Activated CD8-positive, alpha-beta T cell treated with anti-CD3 and anti-CD28 coated beads, Interleukin-2, amount 10 ng/mL, durations not matched to agents 7 days and 5 days (primary cell): ENCODE measurements at regions of chr11 and their contacts with region 1.

Region 1: GRCh38 chr11:125649465-125650166 is 24.7 kb downstream of the CHEK1 start:
- DNase-seq: no peak
- ATAC-seq: peak; percentile 81
- H3K4me3 Mint-ChIP-seq: no peak overlapping the region
- H3K27ac Mint-ChIP-seq: no peak overlapping the region
- H3K4me1 Mint-ChIP-seq: peaks cover 16% of the 10 kb centered on the region
- H3K27me3 Mint-ChIP-seq: no peaks in the 10 kb centered on the region

Region 2: DNA sequence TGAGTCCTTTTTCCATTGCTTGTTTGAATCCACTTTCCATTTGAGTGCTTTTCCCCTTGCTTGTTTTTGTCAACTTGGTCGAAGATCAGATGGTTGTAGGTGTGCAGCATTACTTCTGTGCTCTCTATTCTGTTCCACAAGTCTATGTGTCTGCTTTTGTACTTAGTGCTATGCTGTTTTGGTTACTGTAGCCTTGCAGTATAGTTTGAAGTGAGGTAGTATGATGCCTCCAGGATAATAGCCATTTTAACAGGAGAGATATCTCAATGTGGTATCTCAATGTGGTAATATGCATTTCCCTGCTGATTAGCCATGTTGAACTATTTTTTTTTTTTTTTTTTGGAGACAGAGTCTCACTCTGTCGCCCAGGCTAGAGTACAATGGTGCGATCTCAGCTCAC is 14.3 kb after region 1 on chr11:
- CTCF ChIA-PET with region 1: no interaction called
- POLR2A ChIA-PET with region 1: no interaction called
- DNase-seq: no peak
- ATAC-seq: peak; percentile 36
- H3K4me3 Mint-ChIP-seq: no peak overlapping the region
- H3K27ac Mint-ChIP-seq: no peak overlapping the region
- H3K4me1 Mint-ChIP-seq: peaks cover 14% of the 10 kb centered on the region
- H3K27me3 Mint-ChIP-seq: no peaks in the 10 kb centered on the region

Region 3: DNA sequence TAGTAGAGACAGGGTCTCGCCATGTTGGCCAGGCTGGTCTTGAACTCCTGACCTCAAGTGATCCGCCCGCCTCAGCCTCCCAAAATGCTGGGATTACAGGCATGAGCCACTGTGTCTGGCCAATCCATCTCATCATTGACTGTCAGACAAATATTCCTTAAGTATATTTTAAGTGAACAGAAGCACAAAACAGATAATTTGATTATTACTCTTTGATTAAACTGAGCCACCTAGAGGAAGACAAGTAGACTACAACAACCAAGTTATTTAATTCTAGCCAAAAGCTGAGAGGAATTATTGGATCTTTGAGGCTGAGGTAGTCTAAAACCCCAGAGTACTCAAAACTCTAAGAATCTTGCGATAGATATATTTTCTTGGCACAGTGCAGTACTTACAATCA is 29.8 kb after region 1 on chr11:
- CTCF ChIA-PET with region 1: interaction called, 11 read pairs
- POLR2A ChIA-PET with region 1: no interaction called
- DNase-seq: no peak
- ATAC-seq: no peak
- H3K4me3 Mint-ChIP-seq: no peak overlapping the region
- H3K27ac Mint-ChIP-seq: no peak overlapping the region
- H3K4me1 Mint-ChIP-seq: no peaks in the 10 kb centered on the region
- H3K27me3 Mint-ChIP-seq: no peaks in the 10 kb centered on the region

Region 4: GRCh38 chr11:125797641-125798040 is 148.0 kb after region 1 on chr11:
- CTCF ChIA-PET with region 1: no interaction called
- POLR2A ChIA-PET with region 1: no interaction called
- DNase-seq: no peak
- ATAC-seq: no peak
- H3K4me3 Mint-ChIP-seq: no peak overlapping the region
- H3K27ac Mint-ChIP-seq: no peak overlapping the region
- H3K4me1 Mint-ChIP-seq: no peaks in the 10 kb centered on the region
- H3K27me3 Mint-ChIP-seq: peaks cover 7% of the 10 kb centered on the region